IMR-90 (cell line): ENCODE measurements at regions of chr20 and their contacts with region 1.

Region 1: DNA sequence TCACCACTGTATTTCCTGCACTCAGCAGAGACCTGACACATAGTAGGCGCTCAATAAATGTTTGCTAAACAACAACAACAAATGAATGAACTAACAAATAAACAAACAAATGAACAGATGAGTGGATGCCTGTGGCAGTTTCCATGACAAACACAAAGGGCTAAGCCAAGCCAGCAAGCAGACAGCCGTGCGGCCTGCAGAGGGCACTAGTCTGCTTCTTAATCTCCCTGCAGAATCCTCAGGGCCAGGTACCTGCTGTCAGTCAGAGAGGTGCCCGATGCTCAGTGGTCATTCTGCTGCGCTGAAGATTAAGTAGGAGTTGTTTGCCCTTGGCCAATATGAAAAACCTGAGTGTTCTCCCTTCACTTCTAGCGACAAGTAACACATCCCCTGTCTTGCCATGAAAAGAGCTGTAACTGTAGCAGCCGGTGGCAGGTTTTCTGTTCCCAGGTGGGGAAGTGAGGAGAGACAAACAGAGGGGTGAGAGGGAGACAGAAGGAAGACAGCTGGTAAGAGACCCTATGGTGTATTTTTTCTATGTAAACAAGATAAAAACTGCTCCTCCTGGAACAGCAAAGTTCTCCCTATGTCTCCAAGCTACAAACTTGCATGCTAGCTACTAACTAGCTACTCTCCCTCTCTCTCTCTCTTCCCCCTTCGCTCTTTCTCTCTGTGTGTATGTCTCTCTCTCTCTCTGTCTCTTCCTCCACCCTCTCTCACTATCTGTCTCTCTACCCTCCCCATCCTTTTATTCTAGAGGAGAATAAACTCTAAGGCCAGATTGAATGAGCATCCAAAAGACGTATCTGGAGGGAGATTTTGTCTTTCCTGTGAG is at the start of gene MC3R:
- DNase-seq: peak; percentile 30
- ATAC-seq: peak; percentile 49
- H3K4me3 ChIP-seq: no peak within 1 kb of the TSS
- H3K27ac ChIP-seq: no peak within 1 kb of the TSS
- H3K4me1 ChIP-seq: no peaks in the 10 kb centered on the region
- H3K27me3 ChIP-seq: no peaks in the 10 kb centered on the region
- CTCF ChIP-seq: peak; percentile 52
- POLR2A ChIP-seq: no peak
- RAD21 ChIP-seq: peak; percentile 59
- total RNA-seq, gene MC3R: not detected in 2 replicates

Region 2: DNA sequence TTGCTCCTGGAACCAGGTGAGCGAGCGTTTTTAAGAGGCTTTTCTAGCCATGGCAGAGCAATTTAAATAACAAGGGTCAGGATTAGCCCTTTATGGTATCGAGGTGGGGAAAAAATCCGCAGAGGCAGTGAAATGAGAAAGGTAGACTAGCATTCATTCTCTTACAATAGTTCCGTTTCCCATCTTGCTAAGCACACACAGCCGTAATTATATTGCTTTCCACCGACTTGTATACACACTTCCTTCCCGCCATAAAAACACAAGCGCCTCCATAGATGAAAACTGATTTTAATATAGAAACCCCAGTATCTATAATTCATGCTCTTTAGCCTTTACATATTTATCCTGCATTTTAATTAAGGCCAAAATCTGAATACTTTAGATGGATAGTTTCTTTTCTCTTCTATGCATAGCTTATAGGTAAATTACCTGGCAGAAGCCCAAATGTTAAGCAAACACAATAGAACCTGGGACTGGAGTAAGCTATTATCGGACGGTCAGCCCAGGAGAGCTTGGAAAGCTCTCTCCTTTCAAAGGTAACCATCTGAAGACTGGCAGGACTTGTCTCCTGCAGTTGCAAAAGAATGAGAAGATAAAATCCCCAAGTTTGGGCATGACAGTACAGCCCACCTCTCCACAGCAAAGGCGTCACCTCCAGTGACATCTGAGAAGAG is 90.5 kb before region 1 on chr20:
- CTCF ChIA-PET with region 1: no interaction called
- POLR2A ChIA-PET with region 1: no interaction called
- dilution Hi-C with region 1: no loop called
- in situ Hi-C with region 1: no loop called
- intact Hi-C with region 1: no loop called
- DNase-seq: no peak
- ATAC-seq: no peak
- H3K4me3 ChIP-seq: no peak overlapping the region
- H3K27ac ChIP-seq: no peak overlapping the region
- H3K4me1 ChIP-seq: no peaks in the 10 kb centered on the region
- H3K27me3 ChIP-seq: no peaks in the 10 kb centered on the region
- CTCF ChIP-seq: no peak
- POLR2A ChIP-seq: no peak
- RAD21 ChIP-seq: no peak

Region 3: DNA sequence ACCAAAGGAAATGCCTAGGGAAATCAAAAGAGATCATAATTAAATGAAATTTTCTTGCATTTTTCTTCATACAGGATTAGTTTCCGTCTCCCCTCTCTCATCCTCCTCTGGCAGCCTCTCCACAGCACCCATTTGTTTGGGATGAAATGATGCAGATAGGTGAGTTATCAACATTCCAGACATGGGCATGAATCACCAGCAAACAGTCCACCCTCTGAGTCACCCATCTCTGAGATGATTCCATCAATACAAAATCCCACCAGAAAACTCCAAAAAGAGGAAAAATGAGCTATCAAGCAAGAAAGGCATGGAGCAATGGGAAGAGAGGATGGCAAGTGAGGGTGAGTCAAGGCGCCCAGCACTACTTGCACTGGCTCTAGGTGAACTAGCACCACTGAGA is 11.8 kb after region 1 on chr20:
- CTCF ChIA-PET with region 1: no interaction called
- POLR2A ChIA-PET with region 1: no interaction called
- dilution Hi-C with region 1: no loop called
- in situ Hi-C with region 1: no loop called
- intact Hi-C with region 1: no loop called
- DNase-seq: no peak
- ATAC-seq: no peak
- H3K4me3 ChIP-seq: no peak overlapping the region
- H3K27ac ChIP-seq: no peak overlapping the region
- H3K4me1 ChIP-seq: no peaks in the 10 kb centered on the region
- H3K27me3 ChIP-seq: no peaks in the 10 kb centered on the region
- CTCF ChIP-seq: no peak
- POLR2A ChIP-seq: no peak
- RAD21 ChIP-seq: no peak

Region 4: GRCh38 chr20:56343861-56344381 is 95.8 kb after region 1 on chr20:
- CTCF ChIA-PET with region 1: interaction called, 6 read pairs
- POLR2A ChIA-PET with region 1: no interaction called
- dilution Hi-C with region 1: no loop called
- in situ Hi-C with region 1: no loop called
- intact Hi-C with region 1: loop called (anchors 5 kb)
- DNase-seq: peak; percentile 24
- ATAC-seq: peak; percentile 98
- H3K4me3 ChIP-seq: 0 out of 2 replicates have a peak overlapping the region, but pooled peaks have one; percentile 15
- H3K27ac ChIP-seq: no peak overlapping the region
- H3K4me1 ChIP-seq: no peaks in the 10 kb centered on the region
- H3K27me3 ChIP-seq: peaks cover 25% of the 10 kb centered on the region
- CTCF ChIP-seq: peak; percentile 59
- POLR2A ChIP-seq: no peak
- RAD21 ChIP-seq: peak; percentile 71

Region 5: DNA sequence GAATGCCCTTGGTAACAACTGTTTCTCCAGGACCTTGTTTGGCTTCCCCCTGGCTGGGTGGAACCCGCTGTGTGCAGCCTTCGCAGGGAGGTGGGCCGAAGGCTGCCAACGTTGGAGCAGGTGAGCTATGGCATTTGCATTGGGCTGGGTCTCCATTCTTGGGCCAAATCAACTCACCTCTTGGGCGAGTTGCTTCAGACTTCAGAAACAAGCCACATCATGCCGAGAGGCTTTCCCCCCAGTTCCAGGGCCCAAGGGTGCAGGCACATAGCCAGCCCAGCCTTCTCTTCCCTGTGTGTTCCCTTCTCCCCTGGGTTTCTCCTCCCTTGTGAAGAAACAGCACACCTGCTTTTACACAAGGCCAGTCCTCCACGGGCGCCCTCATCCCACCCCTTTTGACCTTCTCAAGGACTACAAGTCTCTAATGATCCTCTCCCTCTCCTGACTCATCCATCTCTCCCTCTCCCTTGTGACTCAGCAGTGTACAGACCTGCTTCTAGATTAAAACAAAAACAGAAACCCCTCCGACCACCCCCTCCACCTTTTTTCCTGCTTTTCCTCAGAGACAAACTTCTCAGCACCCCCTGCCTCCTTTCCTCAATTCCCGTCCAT is 326.5 kb after region 1 on chr20:
- CTCF ChIA-PET with region 1: no interaction called
- POLR2A ChIA-PET with region 1: no interaction called
- dilution Hi-C with region 1: no loop called
- in situ Hi-C with region 1: no loop called
- intact Hi-C with region 1: loop called (anchors 5 kb)
- DNase-seq: no peak
- ATAC-seq: no peak
- H3K4me3 ChIP-seq: no peak overlapping the region
- H3K27ac ChIP-seq: no peak overlapping the region
- H3K4me1 ChIP-seq: no peaks in the 10 kb centered on the region
- H3K27me3 ChIP-seq: peaks cover 14% of the 10 kb centered on the region
- CTCF ChIP-seq: no peak
- POLR2A ChIP-seq: no peak
- RAD21 ChIP-seq: no peak